ENCODE measurements at regions of chr17 and their contacts with region 1.

Region 1: GRCh38 chr17:28758411-28759121 is 14.8 kb downstream of the TRAF4 start:
- DNase-seq: no peak
- ATAC-seq: no peak
- H3K4me3 Mint-ChIP-seq: no peak overlapping the region
- H3K27ac Mint-ChIP-seq: no peak overlapping the region
- H3K4me1 Mint-ChIP-seq: peaks cover 8% of the 10 kb centered on the region
- H3K27me3 Mint-ChIP-seq: no peaks in the 10 kb centered on the region
- CTCF ChIP-seq: no peak

Region 2: DNA sequence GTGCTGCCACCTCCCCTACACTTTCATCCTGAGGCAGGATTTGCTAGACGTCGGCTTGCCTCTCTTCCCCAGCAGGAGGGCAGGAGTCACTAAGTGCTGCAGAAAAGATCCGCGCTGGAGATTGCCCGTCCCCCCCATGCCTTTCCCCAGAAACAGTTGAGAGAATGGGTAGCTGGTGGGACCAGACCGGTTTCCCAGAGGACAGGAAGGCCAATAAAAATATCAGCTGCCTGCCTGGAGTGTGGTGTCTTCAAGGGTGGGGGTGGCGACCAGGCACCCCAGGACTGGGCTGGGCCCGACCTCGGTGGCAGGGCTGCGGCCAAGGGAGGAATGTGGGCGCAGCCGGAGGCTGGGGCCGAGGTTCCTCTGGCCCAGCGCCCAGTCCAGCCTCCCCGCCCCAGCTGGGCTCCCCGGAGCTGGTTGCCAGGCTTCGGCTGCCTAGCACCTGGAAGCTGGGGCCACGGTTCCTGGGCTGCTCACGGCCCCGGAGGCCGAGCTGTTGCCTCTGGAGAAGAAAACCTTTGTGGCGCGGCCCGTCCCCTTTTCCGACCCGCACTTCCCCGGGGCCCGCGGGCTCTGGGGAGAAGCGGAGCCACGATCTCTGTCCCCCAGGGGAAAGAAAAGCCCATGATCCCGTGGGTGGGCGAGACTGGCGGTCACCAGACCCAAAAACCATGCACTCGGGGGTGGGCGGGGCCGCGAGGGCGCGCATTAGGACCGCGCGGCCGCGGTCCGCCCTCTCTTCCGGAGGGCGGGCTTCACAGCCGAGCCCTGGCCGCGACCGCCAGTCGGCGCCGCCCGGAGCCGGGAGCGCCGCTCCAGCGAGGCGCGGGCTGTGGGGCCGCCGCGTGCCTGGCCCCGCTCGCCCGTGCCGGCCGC is 15.1 kb before region 1 on chr17 and contains the start of gene TRAF4:
- CTCF ChIA-PET with region 1: interaction called, 109 read pairs
- POLR2A ChIA-PET with region 1: interaction called, 10 read pairs
- intact Hi-C with region 1: no loop called
- DNase-seq: peak; percentile 90
- ATAC-seq: peak; percentile 87
- H3K4me3 Mint-ChIP-seq: peak within 1 kb of the TSS; percentile 91
- H3K27ac Mint-ChIP-seq: peak within 1 kb of the TSS; percentile 90
- H3K4me1 Mint-ChIP-seq: peaks cover 43% of the 10 kb centered on the region
- H3K27me3 Mint-ChIP-seq: no peaks in the 10 kb centered on the region
- CTCF ChIP-seq: no peak
- total RNA-seq, gene TRAF4: 140 to 151 TPM